ENCODE measurements at regions of chr17 and their contacts with region 1.

Region 1: GRCh38 chr17:17972126-17972951 is at the starts of genes DRC3 and TOM1L2:
- DNase-seq: peak; percentile 98
- ATAC-seq: peak; percentile 97
- H3K4me3 Mint-ChIP-seq: peak within 1 kb of the TSS; percentile 96
- H3K27ac Mint-ChIP-seq: peak within 1 kb of the TSS; percentile 92
- H3K4me1 Mint-ChIP-seq: peaks cover 20% of the 10 kb centered on the region
- H3K27me3 Mint-ChIP-seq: peaks cover 2% of the 10 kb centered on the region
- total RNA-seq, gene DRC3: 0.67 to 0.77 TPM
- total RNA-seq, gene TOM1L2: 32.9 to 37.0 TPM

Region 2: GRCh38 chr17:17959520-17960361 is 12.6 kb before region 1 on chr17:
- POLR2A ChIA-PET with region 1: interaction called, 26 read pairs
- DNase-seq: no peak
- ATAC-seq: peak; percentile 67
- H3K4me3 Mint-ChIP-seq: peak overlapping the region; percentile 76
- H3K27ac Mint-ChIP-seq: peak overlapping the region; percentile 97
- H3K4me1 Mint-ChIP-seq: peaks cover 58% of the 10 kb centered on the region
- H3K27me3 Mint-ChIP-seq: no peaks in the 10 kb centered on the region

Measured in activated naive CD8-positive, alpha-beta T cell treated with anti-CD3 and anti-CD28 coated beads, Interleukin-2, amount 10 ng/mL, durations not matched to agents 7 days and 5 days (primary cell).